Activated CD4-positive, alpha-beta memory T cell treated with anti-CD3 and anti-CD28 coated beads, Interleukin-2, amount 10 ng/mL, durations not matched to agents 7 days and 5 days (primary cell): ENCODE measurements at regions of chr22 and their contacts with region 1.

Region 1: GRCh38 chr22:35350539-35351503 is 30.1 kb upstream of the HMOX1 start:
- DNase-seq: peak; percentile 91
- H3K4me3 Mint-ChIP-seq: peak overlapping the region; percentile 74
- H3K27ac Mint-ChIP-seq: no peak overlapping the region
- H3K4me1 Mint-ChIP-seq: peaks cover 24% of the 10 kb centered on the region
- H3K27me3 Mint-ChIP-seq: peaks cover 5% of the 10 kb centered on the region

Region 2: GRCh38 chr22:35313311-35314121 is 37.3 kb before region 1 on chr22:
- CTCF ChIA-PET with region 1: no interaction called
- POLR2A ChIA-PET with region 1: no interaction called
- DNase-seq: peak; percentile 38
- H3K4me3 Mint-ChIP-seq: no peak overlapping the region
- H3K27ac Mint-ChIP-seq: peak overlapping the region; percentile 31
- H3K4me1 Mint-ChIP-seq: peaks cover 75% of the 10 kb centered on the region
- H3K27me3 Mint-ChIP-seq: no peaks in the 10 kb centered on the region

Region 3: GRCh38 chr22:35330258-35330861 is 20.5 kb before region 1 on chr22:
- CTCF ChIA-PET with region 1: interaction called, 13 read pairs
- POLR2A ChIA-PET with region 1: interaction called, 3 read pairs
- DNase-seq: peak; percentile 70
- H3K4me3 Mint-ChIP-seq: peak overlapping the region; percentile 22
- H3K27ac Mint-ChIP-seq: peak overlapping the region; percentile 71
- H3K4me1 Mint-ChIP-seq: peaks cover 45% of the 10 kb centered on the region
- H3K27me3 Mint-ChIP-seq: no peaks in the 10 kb centered on the region

Region 4: GRCh38 chr22:35399678-35400334 is 49.0 kb after region 1 on chr22 and contains the start of gene MCM5:
- CTCF ChIA-PET with region 1: interaction called, 11 read pairs
- POLR2A ChIA-PET with region 1: interaction called, 5 read pairs
- DNase-seq: peak; percentile 99
- H3K4me3 Mint-ChIP-seq: peak within 1 kb of the TSS; percentile 100
- H3K27ac Mint-ChIP-seq: peak within 1 kb of the TSS; percentile 97
- H3K4me1 Mint-ChIP-seq: peaks cover 52% of the 10 kb centered on the region
- H3K27me3 Mint-ChIP-seq: no peaks in the 10 kb centered on the region
- total RNA-seq, gene MCM5: 190 to 195 TPM

Region 5: GRCh38 chr22:35582861-35583670 is 232.2 kb after region 1 on chr22:
- CTCF ChIA-PET with region 1: interaction called, 42 read pairs
- POLR2A ChIA-PET with region 1: interaction called, 3 read pairs
- DNase-seq: peak; percentile 48
- H3K4me3 Mint-ChIP-seq: no peak overlapping the region
- H3K27ac Mint-ChIP-seq: no peak overlapping the region
- H3K4me1 Mint-ChIP-seq: no peaks in the 10 kb centered on the region
- H3K27me3 Mint-ChIP-seq: no peaks in the 10 kb centered on the region